PC-9 (cell line): ENCODE measurements at regions of chr2 and their contacts with region 1.

Region 1: GRCh38 chr2:227179988-227180685 is 15.7 kb downstream of the COL4A3 start:
- DNase-seq: no peak
- H3K4me3 ChIP-seq: no peak overlapping the region
- H3K27ac ChIP-seq: no peak overlapping the region
- H3K4me1 ChIP-seq: no peaks in the 10 kb centered on the region
- H3K27me3 ChIP-seq: no peaks in the 10 kb centered on the region
- CTCF ChIP-seq: no peak

Region 2: DNA sequence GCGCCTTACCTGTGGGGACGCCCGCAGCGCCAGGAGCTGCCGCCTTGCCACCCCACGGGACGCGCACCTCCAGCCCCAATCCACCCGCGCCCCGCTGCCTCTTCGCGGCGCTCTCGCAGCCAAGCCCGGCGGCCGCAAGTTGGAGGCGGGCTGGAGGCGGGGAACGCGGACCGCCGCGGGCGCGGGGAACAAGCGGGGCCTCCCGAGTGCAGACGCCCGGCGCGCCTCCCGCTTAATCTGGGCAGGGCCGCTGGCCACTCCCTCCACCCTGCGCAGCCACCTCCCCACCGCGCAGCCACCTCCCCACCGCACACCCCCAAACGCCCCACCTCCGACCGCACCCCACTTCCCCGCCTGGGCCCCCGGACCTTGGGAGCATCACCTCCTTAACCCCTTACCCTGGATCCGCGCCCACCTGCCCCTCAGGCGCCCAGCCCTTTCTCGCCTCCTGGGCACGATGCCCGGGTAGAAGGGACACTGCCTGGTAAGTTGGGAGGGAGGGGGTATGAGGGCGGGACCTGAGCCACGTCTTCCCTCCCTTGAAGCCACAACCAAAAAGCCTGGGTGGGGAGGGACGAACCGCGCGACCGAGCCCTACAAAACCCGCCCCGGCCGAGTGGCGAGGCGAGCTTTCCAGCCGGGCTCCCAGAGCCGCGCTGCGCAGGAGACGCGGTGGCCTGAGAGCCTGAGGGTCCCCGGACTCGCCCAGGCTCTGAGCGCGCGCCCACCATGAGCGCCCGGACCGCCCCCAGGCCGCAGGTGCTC is 16.0 kb before region 1 on chr2 and contains the starts of genes COL4A3 and COL4A4:
- CTCF ChIA-PET with region 1: no interaction called
- POLR2A ChIA-PET with region 1: no interaction called
- intact Hi-C with region 1: no loop called
- DNase-seq: peak in 1 of 2 experiments; percentile 64
- H3K4me3 ChIP-seq: peak within 1 kb of the TSS; percentile 75
- H3K27ac ChIP-seq: no peak within 1 kb of the TSS
- H3K4me1 ChIP-seq: peaks cover 9% of the 10 kb centered on the region; the same call in 1 of the 2 replicates
- H3K27me3 ChIP-seq: no peaks in the 10 kb centered on the region
- CTCF ChIP-seq: no peak
- total RNA-seq, gene COL4A3: 2.2 and 3.5 TPM in 2 replicates
- total RNA-seq, gene COL4A4: 5.6 and 6.0 TPM in 2 replicates

Region 3: DNA sequence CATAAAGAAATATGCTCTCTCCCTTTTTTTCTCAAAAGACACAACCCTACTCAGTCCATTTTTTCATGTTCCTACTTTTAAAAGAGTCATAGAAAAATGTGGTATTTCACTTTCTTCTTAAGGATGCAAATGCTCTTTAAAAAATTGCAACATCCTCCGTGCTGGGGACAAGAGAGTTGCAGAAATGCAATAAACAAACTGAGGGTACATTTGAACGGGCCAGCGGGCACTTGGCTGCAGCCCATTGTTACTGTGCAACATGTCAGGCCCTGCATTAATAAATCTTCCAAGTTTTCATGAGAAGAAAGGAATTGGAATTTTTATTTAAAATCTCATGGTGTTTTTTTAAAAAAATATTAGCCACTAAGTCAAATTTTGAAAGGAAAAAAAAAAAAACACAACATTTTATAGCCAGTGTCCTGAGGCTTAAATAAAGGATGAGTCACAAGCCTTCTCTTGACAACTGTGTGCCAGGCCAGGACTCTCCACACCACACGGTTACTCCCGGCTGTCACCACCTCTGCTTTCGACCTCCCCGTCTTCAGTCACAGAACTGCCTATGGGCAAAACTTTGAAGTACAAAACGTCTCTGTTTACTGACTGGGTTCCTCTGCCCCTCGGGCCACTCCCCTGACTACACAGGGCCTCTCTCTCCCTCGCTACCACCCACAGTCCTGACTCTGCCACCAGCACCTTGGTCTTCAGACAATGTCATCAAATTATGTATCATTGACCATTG is 87.4 kb after region 1 on chr2:
- CTCF ChIA-PET with region 1: no interaction called
- POLR2A ChIA-PET with region 1: no interaction called
- intact Hi-C with region 1: loop called (anchors 1 kb)
- DNase-seq: no peak
- H3K4me3 ChIP-seq: no peak overlapping the region
- H3K27ac ChIP-seq: no peak overlapping the region
- H3K4me1 ChIP-seq: no peaks in the 10 kb centered on the region
- H3K27me3 ChIP-seq: no peaks in the 10 kb centered on the region
- CTCF ChIP-seq: no peak